Mammary epithelial cell (primary cell): ENCODE measurements at regions of chr9 and their contacts with region 1.

Region 1: GRCh38 chr9:128552153-128552743 is at the start of gene SPTAN1:
- DNase-seq: peak; percentile 90
- H3K4me3 ChIP-seq: peak within 1 kb of the TSS; percentile 66 to 88 (median 88)
- H3K27ac ChIP-seq: peak within 1 kb of the TSS; percentile 90
- H3K4me1 ChIP-seq: peaks cover 54% of the 10 kb centered on the region
- H3K27me3 ChIP-seq: no peaks in the 10 kb centered on the region
- CTCF ChIP-seq: no peak
- total RNA-seq, gene SPTAN1: 257 to 307 TPM

Region 2: DNA sequence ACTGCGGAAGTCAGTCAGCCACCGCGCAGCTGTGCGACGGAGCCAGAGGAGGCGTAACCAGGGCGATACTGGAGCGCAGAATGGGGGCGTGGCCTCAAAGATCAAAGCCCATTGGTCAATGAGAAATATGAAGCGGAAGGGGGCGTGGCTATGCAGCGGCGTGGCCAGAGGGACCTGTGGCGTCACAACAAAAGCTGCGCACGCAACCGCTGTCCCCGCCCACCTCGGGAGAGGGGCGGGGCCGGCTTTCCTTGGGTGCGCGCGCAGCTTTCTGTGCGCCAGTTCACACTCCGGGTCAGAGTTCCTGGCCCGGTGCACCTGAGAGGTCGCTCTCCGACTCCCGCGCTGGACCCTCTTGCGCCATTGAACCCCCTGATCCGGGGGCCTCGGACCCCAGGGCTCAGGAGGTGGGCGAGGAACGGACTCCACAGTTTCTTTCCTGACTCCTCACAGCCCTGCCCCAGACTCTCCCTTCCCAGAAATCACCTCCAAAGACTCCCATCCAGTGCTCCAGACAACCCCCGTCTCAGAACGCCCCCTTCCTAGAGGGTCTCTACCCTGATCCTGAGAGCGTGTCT is 276.2 kb before region 1 on chr9 and contains the starts of genes GOLGA2 and SWI5:
- CTCF ChIA-PET with region 1: no interaction called
- dilution Hi-C with region 1: no loop called
- in situ Hi-C with region 1: no loop called
- intact Hi-C with region 1: loop called (anchors 10 kb)
- DNase-seq: peak; percentile 98
- H3K4me3 ChIP-seq: peak within 1 kb of the TSS; percentile 94 to 96 (median 95)
- H3K27ac ChIP-seq: peak within 1 kb of the TSS; percentile 84
- H3K4me1 ChIP-seq: peaks cover 25% of the 10 kb centered on the region
- H3K27me3 ChIP-seq: no peaks in the 10 kb centered on the region
- CTCF ChIP-seq: no peak
- total RNA-seq, gene GOLGA2: 42.2 to 76.7 TPM
- total RNA-seq, gene SWI5: 13.5 to 26.3 TPM

Region 3: GRCh38 chr9:128361986-128362646 is 190.1 kb before region 1 on chr9:
- CTCF ChIA-PET with region 1: no interaction called
- dilution Hi-C with region 1: no loop called
- in situ Hi-C with region 1: no loop called
- intact Hi-C with region 1: loop called (anchors 5 kb)
- DNase-seq: peak; percentile 72
- H3K4me3 ChIP-seq: peak overlapping the region in 2 of 3 experiments; percentile 26 to 56
- H3K27ac ChIP-seq: no peak overlapping the region
- H3K4me1 ChIP-seq: peaks cover 25% of the 10 kb centered on the region
- H3K27me3 ChIP-seq: no peaks in the 10 kb centered on the region
- CTCF ChIP-seq: peak; percentile 87 to 91

Region 4: GRCh38 chr9:128438343-128439109 is 113.7 kb before region 1 on chr9:
- CTCF ChIA-PET with region 1: no interaction called
- dilution Hi-C with region 1: no loop called
- in situ Hi-C with region 1: loop called in 1 of 2 experiments (anchors 10 kb)
- intact Hi-C with region 1: no loop called
- DNase-seq: peak; percentile 47
- H3K4me3 ChIP-seq: no peak overlapping the region
- H3K27ac ChIP-seq: no peak overlapping the region
- H3K4me1 ChIP-seq: no peaks in the 10 kb centered on the region
- H3K27me3 ChIP-seq: no peaks in the 10 kb centered on the region
- CTCF ChIP-seq: peak; percentile 78 to 96

Region 5: DNA sequence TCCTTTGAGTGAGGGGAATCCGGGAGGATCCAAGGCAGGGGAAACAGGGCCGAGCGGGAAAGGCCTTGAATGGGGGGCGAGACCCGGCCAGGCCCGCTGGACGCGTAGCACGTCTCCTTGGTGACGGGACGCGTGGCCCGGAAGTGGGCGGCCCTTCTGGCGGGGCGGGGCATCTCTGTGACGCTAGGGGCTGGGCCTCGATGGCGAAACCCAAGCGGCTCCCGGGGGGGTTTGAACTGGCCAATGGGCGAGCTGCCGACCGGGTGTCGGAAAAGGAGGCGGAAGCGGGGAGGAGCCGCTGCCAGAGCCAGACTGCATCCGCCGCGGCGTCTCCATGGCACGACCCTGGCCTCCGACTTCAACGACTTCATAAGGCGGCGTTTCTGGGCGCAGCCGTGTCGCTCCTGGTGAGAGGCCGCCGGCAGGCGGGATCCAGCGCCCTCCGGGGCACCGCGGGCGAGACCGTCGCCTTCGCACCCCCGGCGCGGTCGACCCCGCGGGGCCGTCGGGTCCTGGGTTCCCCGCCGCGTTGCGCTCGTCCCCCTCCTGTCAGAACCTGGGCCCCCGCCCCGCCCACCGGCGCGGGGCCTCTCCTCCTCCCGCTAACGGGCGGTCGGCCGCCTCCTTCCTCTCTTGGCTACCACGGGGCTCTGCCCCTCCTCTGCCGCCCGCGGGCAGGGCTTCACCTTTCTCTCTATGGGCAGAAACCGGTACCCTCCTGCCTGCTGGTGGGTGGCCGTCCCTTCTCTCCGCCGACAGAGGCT is 96.2 kb before region 1 on chr9 and contains the start of gene ODF2:
- CTCF ChIA-PET with region 1: no interaction called
- dilution Hi-C with region 1: no loop called
- in situ Hi-C with region 1: no loop called
- intact Hi-C with region 1: loop called (anchors 2 kb)
- DNase-seq: peak; percentile 93
- H3K4me3 ChIP-seq: peak within 1 kb of the TSS; percentile 80 to 90 (median 86)
- H3K27ac ChIP-seq: peak within 1 kb of the TSS; percentile 80
- H3K4me1 ChIP-seq: peaks cover 5% of the 10 kb centered on the region
- H3K27me3 ChIP-seq: no peaks in the 10 kb centered on the region
- CTCF ChIP-seq: no peak
- total RNA-seq, gene ODF2: 20.5 to 36.5 TPM

Region 6: GRCh38 chr9:128688512-128689292 is 136.5 kb after region 1 on chr9 and contains the start of gene SET:
- CTCF ChIA-PET with region 1: no interaction called
- dilution Hi-C with region 1: loop called (anchors 5 kb)
- in situ Hi-C with region 1: no loop called
- intact Hi-C with region 1: no loop called
- DNase-seq: peak; percentile 90
- H3K4me3 ChIP-seq: peak within 1 kb of the TSS; percentile 79 to 92 (median 81)
- H3K27ac ChIP-seq: peak within 1 kb of the TSS; percentile 58
- H3K4me1 ChIP-seq: peaks cover 35% of the 10 kb centered on the region
- H3K27me3 ChIP-seq: no peaks in the 10 kb centered on the region
- CTCF ChIP-seq: no peak
- total RNA-seq, gene SET: 282 to 484 TPM